Activated naive CD8-positive, alpha-beta T cell treated with anti-CD3 and anti-CD28 coated beads, Interleukin-2, amount 10 ng/mL, durations not matched to agents 7 days and 5 days (primary cell): ENCODE measurements at regions of chr12 and their contacts with region 1.

Region 1: DNA sequence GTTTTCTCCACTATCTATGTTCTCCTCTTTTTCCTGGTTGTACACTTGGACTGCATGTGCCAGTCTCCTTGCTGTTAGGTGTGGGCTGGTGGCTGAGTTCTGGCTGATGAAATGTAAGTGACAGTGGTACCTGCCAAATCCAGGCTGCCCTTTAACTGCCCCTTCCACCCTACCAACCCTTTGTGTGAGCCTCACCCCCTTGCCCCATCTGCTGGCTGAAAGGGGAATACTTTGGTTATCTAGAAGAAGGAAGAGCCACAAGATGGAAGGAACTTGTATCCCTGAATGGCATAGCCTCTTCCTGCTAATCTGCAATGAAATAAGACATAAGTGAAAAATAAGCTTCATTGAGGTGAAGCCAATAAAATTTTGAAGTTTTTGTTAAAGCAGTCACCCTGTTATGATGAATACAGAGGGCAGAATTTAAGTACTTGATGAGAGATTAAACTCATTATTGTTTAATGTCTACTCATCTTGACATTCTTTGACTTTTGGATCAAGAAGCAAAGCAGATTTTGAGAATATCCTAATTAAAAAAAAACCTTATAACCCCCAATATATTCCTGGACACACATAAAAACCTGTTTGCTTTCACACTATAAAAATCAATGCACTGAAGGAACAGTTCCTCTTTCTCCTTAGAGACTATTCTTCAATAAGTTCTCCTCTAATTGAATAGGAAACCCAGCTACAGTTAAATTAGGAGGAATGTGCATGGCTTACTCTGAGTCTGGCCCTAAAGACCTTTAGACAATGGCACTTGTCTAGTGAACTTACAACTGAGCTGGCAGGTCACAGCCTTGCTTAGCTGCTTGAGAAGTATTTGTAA is 262.6 kb upstream of the BTG1 start:
- DNase-seq: peak; percentile 45
- ATAC-seq: peak; percentile 30
- H3K4me3 Mint-ChIP-seq: no peak overlapping the region
- H3K27ac Mint-ChIP-seq: peak overlapping the region; percentile 34
- H3K4me1 Mint-ChIP-seq: peaks cover 30% of the 10 kb centered on the region
- H3K27me3 Mint-ChIP-seq: no peaks in the 10 kb centered on the region

Region 2: DNA sequence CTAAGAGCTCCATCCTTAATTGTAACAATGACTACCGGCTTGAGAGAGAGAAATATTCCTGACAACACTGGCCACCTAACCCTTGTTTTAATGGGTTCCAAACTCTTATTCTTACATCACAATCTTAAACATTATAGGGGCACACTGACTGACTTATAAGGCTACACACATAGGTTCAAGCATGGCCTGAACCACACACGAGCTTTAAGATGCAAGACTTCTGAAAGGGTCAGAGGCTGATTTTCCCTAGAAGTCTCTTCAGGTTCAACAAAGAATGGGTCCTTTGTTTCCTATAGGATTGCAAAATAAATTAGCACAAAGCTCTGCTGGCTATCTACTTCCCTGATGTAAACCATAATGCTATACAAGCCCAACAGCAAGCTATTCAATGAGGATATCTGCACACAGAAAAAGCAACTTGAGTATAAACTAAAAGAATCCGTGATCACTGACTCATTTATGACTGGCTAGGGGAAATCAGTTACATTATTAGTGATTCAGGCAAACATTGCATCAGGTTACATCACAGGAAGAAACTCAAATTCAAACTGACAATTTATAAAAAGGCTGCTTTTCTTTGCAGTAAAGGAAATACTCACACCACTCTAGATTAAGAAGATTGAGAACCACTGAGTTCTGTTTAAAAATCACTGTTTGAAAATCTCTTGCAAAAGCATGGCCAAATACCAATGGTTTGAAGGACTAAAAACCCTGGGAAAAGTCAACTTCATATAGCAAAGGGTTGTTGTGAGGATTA is 271.1 kb before region 1 on chr12:
- POLR2A ChIA-PET with region 1: interaction called, 17 read pairs
- DNase-seq: no peak
- ATAC-seq: peak; percentile 16
- H3K4me3 Mint-ChIP-seq: peak overlapping the region; percentile 88
- H3K27ac Mint-ChIP-seq: peak overlapping the region; percentile 88
- H3K4me1 Mint-ChIP-seq: peaks cover 64% of the 10 kb centered on the region
- H3K27me3 Mint-ChIP-seq: no peaks in the 10 kb centered on the region

Region 3: DNA sequence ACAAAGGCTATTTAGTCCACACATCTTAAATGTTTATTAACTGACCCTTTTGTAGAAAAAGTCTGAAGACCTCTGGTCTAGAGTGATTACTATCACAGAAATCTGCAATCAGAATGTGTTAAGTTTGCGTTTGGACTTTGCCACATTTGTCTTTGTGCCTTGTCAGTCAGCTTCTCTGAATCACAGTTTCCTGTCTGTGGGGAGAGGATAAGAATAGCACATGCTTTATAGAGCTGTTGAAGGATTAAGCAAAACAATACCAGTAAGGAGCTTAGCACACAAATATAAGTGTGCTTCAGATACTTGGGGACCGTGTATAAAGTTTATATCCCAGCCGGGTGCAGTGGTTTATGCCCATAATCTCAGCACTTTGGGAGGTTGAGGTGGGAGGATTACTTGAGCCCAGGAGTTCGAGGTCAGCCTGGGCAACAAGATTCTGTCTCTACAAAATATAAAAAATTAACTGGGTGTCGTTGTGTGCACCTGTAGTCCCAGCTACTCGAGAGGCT is 199.6 kb before region 1 on chr12:
- POLR2A ChIA-PET with region 1: interaction called, 17 read pairs
- DNase-seq: peak; percentile 40
- ATAC-seq: peak; percentile 84
- H3K4me3 Mint-ChIP-seq: peak overlapping the region; percentile 59
- H3K27ac Mint-ChIP-seq: peak overlapping the region; percentile 97
- H3K4me1 Mint-ChIP-seq: peaks cover 35% of the 10 kb centered on the region
- H3K27me3 Mint-ChIP-seq: no peaks in the 10 kb centered on the region

Region 4: GRCh38 chr12:92363295-92364146 is 44.8 kb before region 1 on chr12:
- POLR2A ChIA-PET with region 1: interaction called, 23 read pairs
- DNase-seq: peak; percentile 58
- ATAC-seq: peak; percentile 75
- H3K4me3 Mint-ChIP-seq: peak overlapping the region; percentile 82
- H3K27ac Mint-ChIP-seq: peak overlapping the region; percentile 87
- H3K4me1 Mint-ChIP-seq: peaks cover 43% of the 10 kb centered on the region
- H3K27me3 Mint-ChIP-seq: no peaks in the 10 kb centered on the region

Region 5: DNA sequence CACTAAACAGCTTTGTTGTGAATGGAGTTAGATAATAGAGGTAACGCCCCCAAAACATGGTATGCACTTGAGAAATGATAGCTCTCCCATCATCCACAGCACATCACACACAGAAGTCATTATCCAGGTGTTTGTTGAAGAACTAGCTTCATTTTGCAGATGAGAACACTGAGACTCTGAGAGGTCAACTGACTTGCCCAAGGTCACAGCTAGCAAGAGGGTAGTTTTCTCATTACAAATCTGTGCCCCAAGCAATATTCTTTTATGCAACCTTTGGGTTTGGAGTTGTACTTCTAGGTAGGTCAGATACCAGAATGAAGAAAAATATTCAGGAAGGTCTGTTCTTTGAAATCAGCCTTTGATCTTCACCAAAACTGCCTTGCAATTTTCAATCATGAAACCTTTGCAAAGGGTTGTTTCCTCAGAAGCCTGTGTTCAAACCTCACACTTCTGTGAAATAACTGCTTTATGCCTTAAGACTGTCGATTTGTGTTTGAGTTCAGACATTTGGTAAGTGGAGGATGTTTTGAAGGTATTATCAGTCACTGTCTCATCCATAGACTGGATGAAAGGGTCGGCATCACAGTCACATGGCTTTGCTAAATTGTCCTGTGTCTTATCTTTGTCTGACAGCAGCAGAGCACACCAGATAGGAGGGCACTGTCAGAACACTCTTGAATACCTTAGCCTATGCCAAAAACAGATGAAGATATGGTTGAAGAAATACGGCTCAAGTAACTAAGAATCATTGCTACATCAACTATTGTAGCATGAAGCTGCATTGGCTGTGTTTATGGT is 29.4 kb before region 1 on chr12:
- POLR2A ChIA-PET with region 1: interaction called, 27 read pairs
- DNase-seq: no peak
- ATAC-seq: peak; percentile 90
- H3K4me3 Mint-ChIP-seq: peak overlapping the region; percentile 43
- H3K27ac Mint-ChIP-seq: peak overlapping the region; percentile 85
- H3K4me1 Mint-ChIP-seq: peaks cover 28% of the 10 kb centered on the region
- H3K27me3 Mint-ChIP-seq: no peaks in the 10 kb centered on the region

Region 6: DNA sequence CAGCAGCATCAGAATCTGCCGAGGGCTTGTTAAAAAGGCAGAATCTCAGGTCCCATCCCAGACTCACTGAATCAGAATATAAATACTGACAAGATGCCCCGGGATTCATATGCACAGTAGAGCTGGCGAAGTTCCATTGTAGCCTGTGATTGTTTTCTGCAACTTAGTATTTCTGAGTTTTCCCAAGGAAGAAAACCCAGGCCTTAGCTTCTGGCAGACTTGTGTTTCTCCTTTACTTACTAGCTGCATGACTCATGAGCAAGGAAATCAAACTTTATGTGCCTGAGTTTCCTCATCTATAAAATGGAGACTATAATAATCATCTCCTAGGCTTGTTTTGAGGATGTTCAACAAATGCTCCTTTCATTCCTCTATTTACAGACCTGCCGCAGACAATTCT is 16.1 kb after region 1 on chr12:
- POLR2A ChIA-PET with region 1: no interaction called
- DNase-seq: no peak
- ATAC-seq: no peak
- H3K4me3 Mint-ChIP-seq: no peak overlapping the region
- H3K27ac Mint-ChIP-seq: no peak overlapping the region
- H3K4me1 Mint-ChIP-seq: peaks cover 4% of the 10 kb centered on the region
- H3K27me3 Mint-ChIP-seq: no peaks in the 10 kb centered on the region